A673 (cell line): ENCODE measurements at regions of chr11 and their contacts with region 1.

Region 1: DNA sequence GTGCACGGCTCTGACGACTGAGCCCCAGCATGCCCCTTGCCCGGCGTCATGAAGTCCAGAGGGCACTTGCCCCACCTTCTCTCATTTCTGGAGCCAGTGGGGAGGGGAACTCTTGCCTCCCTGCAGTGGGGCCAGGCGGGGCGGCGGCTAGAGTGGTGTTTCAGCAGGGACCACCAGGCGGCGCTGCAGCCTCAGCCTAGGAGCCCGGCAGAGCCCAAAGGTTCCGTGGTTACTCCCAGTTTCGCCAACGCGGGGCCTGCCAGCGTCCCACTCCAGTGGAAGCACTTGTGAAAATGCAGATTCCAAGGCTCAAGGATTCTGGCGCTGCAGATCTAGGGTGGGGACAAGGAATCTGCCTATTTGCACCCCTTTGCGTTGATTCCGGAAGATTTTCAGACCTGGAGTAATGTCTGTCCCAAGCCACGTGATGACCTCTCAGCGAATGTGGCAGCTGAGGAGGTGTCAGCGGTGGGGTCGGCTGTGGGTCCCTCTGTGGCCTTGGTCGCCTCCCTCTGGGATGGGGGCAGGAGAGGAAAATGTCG is 55.7 kb downstream of the CD82 start:
- DNase-seq: peak; percentile 90
- H3K4me3 ChIP-seq: no peak overlapping the region
- H3K27ac ChIP-seq: no peak overlapping the region
- H3K4me1 ChIP-seq: peaks cover 9% of the 10 kb centered on the region
- H3K27me3 ChIP-seq: no peaks in the 10 kb centered on the region
- CTCF ChIP-seq: peak; percentile 100

Region 2: GRCh38 chr11:44095506-44096394 is 525.5 kb before region 1 on chr11 and contains the start of gene EXT2:
- CTCF ChIA-PET with region 1: interaction called, 14 read pairs
- POLR2A ChIA-PET with region 1: no interaction called
- intact Hi-C with region 1: loop called (anchors 5 kb)
- DNase-seq: peak; percentile 95
- H3K4me3 ChIP-seq: peak within 1 kb of the TSS; percentile 66
- H3K27ac ChIP-seq: peak within 1 kb of the TSS; percentile 72
- H3K4me1 ChIP-seq: peaks cover 16% of the 10 kb centered on the region
- H3K27me3 ChIP-seq: no peaks in the 10 kb centered on the region
- CTCF ChIP-seq: peak; percentile 100
- total RNA-seq, gene EXT2: 123 and 128 TPM in 2 replicates

Region 3: GRCh38 chr11:44509296-44509695 is 111.9 kb before region 1 on chr11:
- CTCF ChIA-PET with region 1: no interaction called
- POLR2A ChIA-PET with region 1: no interaction called
- intact Hi-C with region 1: no loop called
- DNase-seq: peak; percentile 66
- H3K4me3 ChIP-seq: no peak overlapping the region
- H3K27ac ChIP-seq: peak overlapping the region; percentile 0
- H3K4me1 ChIP-seq: peaks cover 6% of the 10 kb centered on the region
- H3K27me3 ChIP-seq: no peaks in the 10 kb centered on the region
- CTCF ChIP-seq: no peak

Region 4: GRCh38 chr11:44524751-44525201 is 96.4 kb before region 1 on chr11:
- CTCF ChIA-PET with region 1: interaction called, 16 read pairs
- POLR2A ChIA-PET with region 1: no interaction called
- intact Hi-C with region 1: no loop called
- DNase-seq: peak; percentile 44
- H3K4me3 ChIP-seq: no peak overlapping the region
- H3K27ac ChIP-seq: no peak overlapping the region
- H3K4me1 ChIP-seq: peaks cover 17% of the 10 kb centered on the region
- H3K27me3 ChIP-seq: no peaks in the 10 kb centered on the region
- CTCF ChIP-seq: no peak

Region 5: DNA sequence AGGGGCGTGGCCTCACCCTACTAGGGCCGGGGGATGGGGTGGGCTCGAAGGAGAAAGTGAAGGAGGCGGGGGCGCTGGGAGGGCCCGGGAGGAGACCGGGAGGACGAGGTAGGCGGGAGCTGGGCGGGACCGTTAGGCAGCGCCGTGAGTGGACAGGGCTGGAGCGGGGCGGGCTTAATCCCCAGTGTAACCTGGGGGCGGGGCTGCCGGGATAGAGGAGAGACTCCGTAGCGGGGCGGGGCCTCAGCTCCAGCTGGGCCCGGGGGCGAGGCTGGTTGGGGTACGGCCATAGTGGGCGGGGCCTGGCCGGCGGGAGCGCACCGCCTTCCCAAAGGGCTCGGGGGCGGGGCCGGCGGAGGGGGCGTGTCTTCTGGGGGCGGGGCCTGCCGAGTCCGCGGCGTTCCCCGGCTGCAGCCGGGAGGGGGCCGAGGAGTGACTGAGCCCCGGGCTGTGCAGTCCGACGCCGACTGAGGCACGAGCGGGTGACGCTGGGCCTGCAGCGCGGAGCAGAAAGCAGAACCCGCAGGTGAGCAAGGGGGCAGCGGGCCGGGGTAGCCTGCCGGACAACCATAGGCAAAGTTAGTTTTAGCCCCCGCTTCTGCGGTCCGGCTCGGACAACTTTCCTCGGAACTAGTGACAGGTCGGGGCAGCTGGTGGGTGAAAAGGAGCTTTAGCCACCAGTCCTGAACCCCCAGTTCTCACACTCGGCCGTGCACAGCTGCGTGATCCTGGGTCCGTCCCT is 55.8 kb before region 1 on chr11 and contains the start of gene CD82:
- CTCF ChIA-PET with region 1: interaction called, 17 read pairs
- POLR2A ChIA-PET with region 1: no interaction called
- intact Hi-C with region 1: loop called (anchors 2 kb)
- DNase-seq: peak; percentile 100
- H3K4me3 ChIP-seq: peak within 1 kb of the TSS; percentile 54
- H3K27ac ChIP-seq: peak within 1 kb of the TSS; percentile 86
- H3K4me1 ChIP-seq: peaks cover 26% of the 10 kb centered on the region
- H3K27me3 ChIP-seq: no peaks in the 10 kb centered on the region
- CTCF ChIP-seq: peak; percentile 42
- total RNA-seq, gene CD82: 8.2 and 16.0 TPM in 2 replicates

Region 6: GRCh38 chr11:44600839-44601383 is 20.3 kb before region 1 on chr11:
- CTCF ChIA-PET with region 1: interaction called, 11 read pairs
- POLR2A ChIA-PET with region 1: no interaction called
- intact Hi-C with region 1: no loop called
- DNase-seq: peak; percentile 88
- H3K4me3 ChIP-seq: no peak overlapping the region
- H3K27ac ChIP-seq: no peak overlapping the region
- H3K4me1 ChIP-seq: peaks cover 15% of the 10 kb centered on the region
- H3K27me3 ChIP-seq: no peaks in the 10 kb centered on the region
- CTCF ChIP-seq: no peak

Region 7: DNA sequence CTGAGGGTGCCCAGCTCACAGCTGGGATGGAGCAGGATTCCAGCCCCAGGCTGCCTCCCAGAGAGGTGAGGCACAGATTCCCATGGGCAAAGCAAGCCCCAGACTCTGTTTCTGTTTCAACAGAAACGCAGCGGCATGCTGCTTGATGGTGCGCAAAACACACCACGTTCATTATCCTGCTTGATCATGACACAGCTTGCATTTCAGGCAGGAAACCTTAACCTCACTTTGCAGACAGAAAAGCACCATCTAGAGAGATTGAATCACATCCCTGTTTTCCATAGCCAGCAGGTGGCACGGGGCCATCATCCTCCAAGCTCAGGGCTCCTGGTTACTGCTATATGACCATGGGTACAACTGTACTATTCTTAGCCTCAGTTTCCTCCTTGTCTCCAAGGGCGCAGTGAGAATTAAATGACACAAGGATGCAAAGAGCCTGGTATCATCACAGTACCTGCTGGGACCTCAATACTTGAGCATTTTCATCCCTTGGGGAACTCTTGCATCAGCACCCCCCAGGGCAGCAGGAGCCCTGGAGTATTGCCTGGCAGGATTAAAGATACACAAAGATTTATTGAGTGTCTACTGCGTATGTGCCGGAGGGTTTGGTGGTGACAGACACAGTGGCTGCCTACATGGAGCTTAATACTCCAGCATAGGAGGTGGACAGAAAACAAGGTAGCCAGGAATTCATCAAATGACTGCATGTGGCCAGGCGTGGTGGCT is 219.5 kb after region 1 on chr11:
- CTCF ChIA-PET with region 1: interaction called, 13 read pairs
- POLR2A ChIA-PET with region 1: no interaction called
- intact Hi-C with region 1: no loop called
- DNase-seq: no peak
- H3K4me3 ChIP-seq: no peak overlapping the region
- H3K27ac ChIP-seq: no peak overlapping the region
- H3K4me1 ChIP-seq: no peaks in the 10 kb centered on the region
- H3K27me3 ChIP-seq: no peaks in the 10 kb centered on the region
- CTCF ChIP-seq: no peak

Region 8: DNA sequence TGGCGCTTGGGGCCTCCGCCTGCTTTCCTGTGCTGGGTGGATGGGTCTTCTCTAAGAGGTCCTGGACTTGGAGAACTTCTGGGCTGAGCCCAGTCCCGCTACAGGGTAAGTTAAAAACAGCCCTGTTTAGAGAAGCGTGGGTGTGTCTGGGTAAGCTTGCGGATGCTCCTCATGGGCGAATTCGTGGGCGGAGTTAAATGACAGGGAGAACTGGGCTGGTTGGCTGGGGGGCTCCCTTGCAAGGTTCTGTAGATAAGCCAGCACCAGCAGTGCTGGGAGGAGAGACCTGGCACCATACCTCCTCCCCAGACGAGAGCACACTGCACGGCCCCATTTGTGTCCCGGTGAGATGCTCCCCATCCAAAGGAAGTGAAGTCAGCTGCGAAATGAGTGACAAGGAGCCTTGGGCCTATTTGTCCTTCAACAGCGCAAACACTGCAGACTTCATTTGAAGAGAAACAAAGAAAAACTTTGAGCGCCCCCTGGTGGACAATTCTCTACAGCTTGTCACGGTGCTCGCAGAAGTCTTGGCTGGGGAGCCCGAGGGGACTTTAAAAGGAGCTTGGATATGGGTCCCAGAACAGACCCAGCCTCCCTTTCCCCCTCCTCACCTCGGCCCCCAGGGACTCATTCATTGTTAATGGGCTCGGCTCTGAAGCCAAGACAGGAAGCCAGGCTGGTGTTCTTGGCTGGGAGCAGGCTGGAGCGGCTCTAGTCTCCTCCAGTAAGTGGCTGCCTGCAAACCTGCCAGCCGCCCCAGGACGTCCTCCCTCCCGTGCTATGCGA is 290.0 kb after region 1 on chr11:
- CTCF ChIA-PET with region 1: interaction called, 19 read pairs
- POLR2A ChIA-PET with region 1: no interaction called
- intact Hi-C with region 1: loop called (anchors 1 kb)
- DNase-seq: peak; percentile 98
- H3K4me3 ChIP-seq: no peak overlapping the region
- H3K27ac ChIP-seq: no peak overlapping the region
- H3K4me1 ChIP-seq: peaks cover 16% of the 10 kb centered on the region
- H3K27me3 ChIP-seq: no peaks in the 10 kb centered on the region
- CTCF ChIP-seq: peak; percentile 100